OCI-LY7 (cell line): ENCODE measurements at regions of chr3 and their contacts with region 1.

Region 1: GRCh38 chr3:183591881-183592521 is 36.5 kb upstream of the KLHL6 start:
- DNase-seq: peak; percentile 95
- H3K4me3 ChIP-seq: peak overlapping the region; percentile 57
- H3K27ac ChIP-seq: peak overlapping the region; percentile 98
- H3K4me1 ChIP-seq: peaks cover 84% of the 10 kb centered on the region
- CTCF ChIP-seq: peak; percentile 90

Region 2: DNA sequence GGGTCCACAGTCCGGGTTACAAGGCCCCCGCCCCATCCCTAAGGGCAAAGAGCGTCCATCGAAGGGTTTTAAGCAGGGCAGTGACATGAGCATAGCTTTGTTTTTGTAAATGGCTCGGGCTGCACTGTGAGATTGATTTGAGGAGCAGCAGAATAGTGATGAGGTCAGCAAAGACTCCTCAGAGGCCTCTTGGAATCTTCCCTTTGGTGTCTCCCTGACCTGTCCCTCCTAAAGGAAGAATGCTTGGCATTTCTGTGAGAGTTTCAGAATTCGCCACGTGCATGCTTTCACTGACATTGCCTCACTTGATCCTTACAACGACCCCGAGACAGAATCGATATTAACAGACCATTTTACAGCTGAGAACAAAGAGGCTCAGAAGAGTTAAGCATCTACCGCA is 449.8 kb before region 1 on chr3:
- CTCF ChIA-PET with region 1: no interaction called
- POLR2A ChIA-PET with region 1: no interaction called
- intact Hi-C with region 1: no loop called
- DNase-seq: no peak
- H3K4me3 ChIP-seq: no peak overlapping the region
- H3K27ac ChIP-seq: no peak overlapping the region
- H3K4me1 ChIP-seq: peaks cover 4% of the 10 kb centered on the region
- CTCF ChIP-seq: no peak

Region 3: DNA sequence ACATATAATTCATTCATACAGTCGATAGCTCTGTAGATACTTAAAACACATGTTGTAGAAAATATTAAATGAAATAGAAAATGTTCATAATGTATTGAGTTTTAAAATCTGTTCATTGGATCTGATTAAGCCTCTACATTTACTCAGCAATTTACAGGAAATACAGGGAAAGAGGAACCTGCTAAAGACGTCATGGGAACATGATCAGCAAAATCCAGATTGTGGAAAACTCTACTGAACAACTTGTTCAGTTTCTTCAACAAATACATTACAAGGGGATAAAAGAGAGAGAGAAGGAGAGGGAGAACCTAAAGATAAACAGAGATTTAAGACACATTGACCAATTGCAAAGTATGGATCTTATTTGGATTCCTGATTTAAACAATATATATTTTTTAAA is 83.2 kb before region 1 on chr3:
- CTCF ChIA-PET with region 1: interaction called, 3 read pairs
- POLR2A ChIA-PET with region 1: interaction called, 11 read pairs
- intact Hi-C with region 1: loop called (anchors 1 kb)
- DNase-seq: no peak
- H3K4me3 ChIP-seq: no peak overlapping the region
- H3K27ac ChIP-seq: peak overlapping the region; percentile 48
- H3K4me1 ChIP-seq: peaks cover 81% of the 10 kb centered on the region
- CTCF ChIP-seq: no peak

Region 4: GRCh38 chr3:183537295-183537730 is 54.7 kb before region 1 on chr3:
- CTCF ChIA-PET with region 1: no interaction called
- POLR2A ChIA-PET with region 1: interaction called, 11 read pairs
- intact Hi-C with region 1: no loop called
- DNase-seq: no peak
- H3K4me3 ChIP-seq: peak overlapping the region; percentile 57
- H3K27ac ChIP-seq: peak overlapping the region; percentile 74
- H3K4me1 ChIP-seq: peaks cover 98% of the 10 kb centered on the region
- CTCF ChIP-seq: no peak

Region 5: DNA sequence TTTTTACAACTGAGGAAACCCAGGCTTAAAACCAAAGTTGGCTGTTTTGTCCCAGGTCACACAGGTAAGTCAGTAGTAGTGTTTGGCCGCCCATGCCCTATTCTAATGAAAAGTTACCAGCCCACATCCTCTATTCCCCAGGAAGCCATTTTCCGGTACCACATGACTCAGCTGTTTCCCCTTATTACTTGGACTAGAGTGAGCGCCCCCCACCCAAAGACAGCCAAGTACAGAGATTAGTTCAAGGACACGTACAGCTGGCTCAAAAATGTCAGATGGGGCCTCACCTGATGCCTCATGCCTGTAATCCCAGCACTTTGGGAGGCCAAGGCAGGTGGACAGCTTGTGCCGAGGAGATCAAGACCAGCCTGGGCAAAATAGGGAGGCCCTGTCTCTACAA is 28.0 kb before region 1 on chr3:
- CTCF ChIA-PET with region 1: interaction called, 16 read pairs
- POLR2A ChIA-PET with region 1: interaction called, 21 read pairs
- intact Hi-C with region 1: no loop called
- DNase-seq: peak; percentile 51
- H3K4me3 ChIP-seq: peak overlapping the region; percentile 1
- H3K27ac ChIP-seq: peak overlapping the region; percentile 75
- H3K4me1 ChIP-seq: peaks cover 90% of the 10 kb centered on the region
- CTCF ChIP-seq: peak; percentile 26; the same call in 1 of the 2 replicates

Region 6: DNA sequence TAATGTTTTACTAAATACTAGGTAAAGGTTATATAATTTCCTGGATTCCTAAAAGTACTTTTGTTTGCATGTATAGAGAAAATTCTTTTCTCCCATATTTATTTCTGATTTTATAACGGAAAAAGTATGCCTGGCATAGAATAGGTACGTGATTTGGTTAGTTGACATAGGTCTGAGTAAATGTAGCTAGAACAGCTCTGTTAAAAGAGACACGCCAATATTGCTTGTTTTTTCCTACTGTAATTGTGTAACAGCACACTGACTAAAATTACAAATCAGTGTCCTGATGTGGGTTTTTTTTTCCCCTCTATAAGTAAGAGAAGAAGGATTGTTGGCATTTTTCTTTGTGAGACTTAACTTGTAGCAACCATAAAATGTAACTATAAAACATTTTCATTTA is 70.1 kb after region 1 on chr3:
- CTCF ChIA-PET with region 1: no interaction called
- POLR2A ChIA-PET with region 1: no interaction called
- intact Hi-C with region 1: no loop called
- DNase-seq: no peak
- H3K4me3 ChIP-seq: no peak overlapping the region
- H3K27ac ChIP-seq: no peak overlapping the region
- H3K4me1 ChIP-seq: no peaks in the 10 kb centered on the region
- CTCF ChIP-seq: no peak

Region 7: DNA sequence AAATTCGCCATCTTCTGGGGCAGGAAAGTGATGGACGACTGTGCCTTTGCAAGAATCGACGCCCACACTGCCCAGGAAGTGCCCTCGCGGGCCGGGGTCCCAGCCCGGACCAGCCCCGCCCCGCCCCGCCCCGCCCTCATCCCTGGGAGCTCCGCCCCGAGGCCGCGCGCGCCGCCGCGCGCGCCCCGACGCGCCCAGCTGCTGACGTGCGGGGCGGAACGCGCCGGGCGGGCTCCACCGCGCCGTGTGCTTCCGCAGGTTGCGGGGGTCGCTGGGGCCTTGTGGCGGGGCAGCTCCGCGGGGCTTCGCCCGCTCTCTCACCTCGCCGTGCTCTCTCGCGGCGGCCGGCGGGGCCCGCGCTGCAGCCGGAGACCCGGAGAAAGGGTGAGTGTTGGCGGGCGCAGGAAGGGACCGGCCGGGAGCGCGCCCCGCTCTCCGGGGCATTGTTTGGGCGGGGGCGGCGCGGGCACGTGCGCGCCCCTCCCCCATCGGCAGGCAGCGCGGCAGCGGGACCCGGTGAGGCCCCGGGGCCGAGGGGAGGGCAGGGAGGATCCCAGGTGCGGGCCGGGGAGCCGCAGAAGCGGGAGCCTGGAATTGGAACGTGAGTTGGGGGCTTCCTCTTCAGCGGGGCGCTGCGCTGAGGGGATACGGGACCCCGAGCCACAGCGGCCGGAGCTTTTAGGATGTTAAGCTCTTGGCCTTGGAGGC is 105.8 kb after region 1 on chr3 and contains the start of gene YEATS2:
- CTCF ChIA-PET with region 1: interaction called, 3 read pairs
- POLR2A ChIA-PET with region 1: interaction called, 6 read pairs
- intact Hi-C with region 1: loop called (anchors 2 kb)
- DNase-seq: peak; percentile 86
- H3K4me3 ChIP-seq: peak within 1 kb of the TSS; percentile 96
- H3K27ac ChIP-seq: peak within 1 kb of the TSS; percentile 83
- H3K4me1 ChIP-seq: peaks cover 17% of the 10 kb centered on the region
- CTCF ChIP-seq: no peak
- total RNA-seq, gene YEATS2: 50.7 and 68.2 TPM in 2 replicates